H1 (cell line): ENCODE measurements at regions of chr11 and their contacts with region 1.

Region 1: GRCh38 chr11:134014511-134014910 is 54.4 kb upstream of the JAM3 start:
- DNase-seq: no peak
- H3K4me3 ChIP-seq: no peak overlapping the region
- H3K27ac ChIP-seq: no peak overlapping the region
- H3K4me1 ChIP-seq: no peaks in the 10 kb centered on the region; a peak in 1 of 7 replicates
- H3K27me3 ChIP-seq: 0 out of 7 replicates have a peak, but pooled peaks cover 0 to 4% (median 0%) of the 10 kb centered on the region in 4 experiments
- CTCF ChIP-seq: peak; percentile 70 to 82 (median 80)
- EP300 ChIP-seq: no peak
- POLR2A ChIP-seq: no peak
- RAD21 ChIP-seq: peak; percentile 71 to 86

Region 2: GRCh38 chr11:134024420-134025081 is 10.0 kb after region 1 on chr11:
- CTCF ChIA-PET with region 1: interaction called, 91 read pairs
- POLR2A ChIA-PET with region 1: no interaction called
- DNase-seq: no peak
- H3K4me3 ChIP-seq: no peak overlapping the region
- H3K27ac ChIP-seq: no peak overlapping the region
- H3K4me1 ChIP-seq: peaks cover 0 to 9% (median 2%) of the 10 kb centered on the region in 4 experiments; a peak in 3 of 7 replicates
- H3K27me3 ChIP-seq: no peaks in the 10 kb centered on the region
- CTCF ChIP-seq: no peak
- EP300 ChIP-seq: no peak
- POLR2A ChIP-seq: no peak
- RAD21 ChIP-seq: no peak

Region 3: GRCh38 chr11:134033696-134034491 is 19.4 kb after region 1 on chr11:
- CTCF ChIA-PET with region 1: interaction called, 91 read pairs
- POLR2A ChIA-PET with region 1: interaction called, 3 read pairs
- DNase-seq: peak; percentile 77 to 78
- H3K4me3 ChIP-seq: peak overlapping the region in 1 of 4 experiments; percentile 23; a peak in 1 of 8 replicates
- H3K27ac ChIP-seq: no peak overlapping the region
- H3K4me1 ChIP-seq: peaks cover 3 to 27% (median 23%) of the 10 kb centered on the region in 4 experiments
- H3K27me3 ChIP-seq: peaks cover 0 to 5% (median 3%) of the 10 kb centered on the region in 4 experiments; a peak in 3 of 7 replicates
- CTCF ChIP-seq: no peak
- EP300 ChIP-seq: no peak
- POLR2A ChIP-seq: peak in 1 of 2 experiments; percentile 64; a peak in 2 of 3 replicates
- RAD21 ChIP-seq: no peak

Region 4: DNA sequence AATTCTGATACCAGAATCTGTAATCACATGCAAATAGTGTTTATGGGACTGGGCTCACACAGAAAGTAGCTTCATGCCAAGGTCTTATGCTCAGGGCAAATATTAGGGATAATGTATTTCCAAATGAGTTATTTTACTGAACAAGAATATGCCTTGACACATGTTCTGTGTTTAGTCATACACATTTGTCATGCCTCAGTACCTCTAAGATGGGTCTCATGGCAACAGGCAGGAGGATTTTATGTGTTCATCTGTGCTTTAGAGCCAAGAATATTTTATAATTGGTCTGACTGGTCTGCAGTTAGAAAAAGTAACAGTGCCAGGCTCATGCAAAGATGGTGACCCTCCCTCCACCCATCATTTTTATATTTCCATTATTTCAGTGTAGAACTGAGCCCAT is 103.5 kb after region 1 on chr11:
- CTCF ChIA-PET with region 1: no interaction called
- POLR2A ChIA-PET with region 1: no interaction called
- DNase-seq: no peak
- H3K4me3 ChIP-seq: no peak overlapping the region
- H3K27ac ChIP-seq: no peak overlapping the region
- H3K4me1 ChIP-seq: peaks cover 0 to 9% (median 4%) of the 10 kb centered on the region in 4 experiments; a peak in 3 of 7 replicates
- H3K27me3 ChIP-seq: no peaks in the 10 kb centered on the region
- CTCF ChIP-seq: no peak
- EP300 ChIP-seq: no peak
- POLR2A ChIP-seq: no peak
- RAD21 ChIP-seq: no peak